ENCODE measurements at regions of chr12 and their contacts with region 1.

Region 1: DNA sequence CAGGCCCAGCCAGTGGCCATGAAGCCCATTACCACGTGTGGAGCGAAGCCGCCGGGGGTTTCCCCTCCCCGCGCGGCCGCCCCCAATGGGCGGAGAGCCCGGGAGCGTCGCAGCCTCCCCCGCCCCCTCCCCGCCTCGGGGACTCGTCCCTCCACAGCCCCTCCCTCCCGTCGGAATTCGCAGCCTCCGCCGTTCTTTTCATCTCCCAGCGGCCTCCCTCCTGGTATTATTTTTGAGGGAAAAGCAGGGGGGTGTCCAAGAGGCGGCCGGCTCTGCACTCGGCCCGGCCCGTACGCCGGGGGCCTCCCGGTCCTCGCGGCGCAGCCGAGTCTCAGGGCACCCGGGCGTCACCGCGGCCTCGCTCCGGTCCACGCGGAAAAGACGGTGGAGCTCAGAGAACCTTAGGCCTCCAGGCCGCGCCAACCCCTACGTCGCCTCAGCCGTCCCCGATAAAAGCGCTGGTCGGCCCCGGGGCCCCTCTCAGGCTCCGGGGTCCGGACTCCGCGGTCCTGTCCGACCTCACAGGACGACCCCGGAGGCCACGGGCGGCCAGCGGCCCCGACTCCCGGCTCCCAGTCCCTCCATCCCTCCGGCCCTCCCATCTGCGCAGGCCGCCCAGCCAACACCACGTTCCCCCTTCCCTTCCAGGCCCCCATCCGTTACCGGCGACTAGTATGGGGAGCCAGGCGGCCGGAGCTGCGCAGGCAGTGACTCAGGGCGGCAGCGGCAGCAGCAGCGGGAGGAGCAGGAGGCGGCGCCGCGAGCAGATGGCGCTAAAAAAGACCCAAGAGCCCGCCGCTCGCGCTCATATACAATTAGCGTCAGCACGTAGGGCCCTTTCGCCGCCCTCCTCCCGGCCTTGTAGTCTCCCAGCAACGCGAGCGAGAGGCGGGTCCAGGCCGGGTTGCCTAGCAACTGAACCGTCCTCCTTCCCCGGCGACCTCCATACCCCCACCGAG is at the start of gene NAP1L1:
- DNase-seq: peak; percentile 98
- ATAC-seq: peak; percentile 86
- H3K4me3 Mint-ChIP-seq: peak within 1 kb of the TSS; percentile 79
- H3K27ac Mint-ChIP-seq: peak within 1 kb of the TSS; percentile 98
- H3K4me1 Mint-ChIP-seq: peaks cover 44% of the 10 kb centered on the region
- H3K27me3 Mint-ChIP-seq: no peaks in the 10 kb centered on the region
- total RNA-seq, gene NAP1L1: 959 to 1,004 TPM

Region 2: GRCh38 chr12:75334384-75335030 is 749.7 kb before region 1 on chr12 and contains the start of gene GLIPR1L1:
- CTCF ChIA-PET with region 1: no interaction called
- POLR2A ChIA-PET with region 1: no interaction called
- intact Hi-C with region 1: loop called in 1 of 2 experiments (anchors 2 kb)
- DNase-seq: peak; percentile 91
- ATAC-seq: peak; percentile 82
- H3K4me3 Mint-ChIP-seq: peak within 1 kb of the TSS; percentile 61
- H3K27ac Mint-ChIP-seq: no peak within 1 kb of the TSS
- H3K4me1 Mint-ChIP-seq: peaks cover 25% of the 10 kb centered on the region
- H3K27me3 Mint-ChIP-seq: peaks cover 21% of the 10 kb centered on the region
- total RNA-seq, gene GLIPR1L1: not detected

Region 3: GRCh38 chr12:75511116-75512048 is 572.8 kb before region 1 on chr12 and contains the start of gene KRR1:
- CTCF ChIA-PET with region 1: no interaction called
- POLR2A ChIA-PET with region 1: no interaction called
- intact Hi-C with region 1: loop called (anchors 1 kb)
- DNase-seq: peak; percentile 94
- ATAC-seq: peak; percentile 96
- H3K4me3 Mint-ChIP-seq: peak within 1 kb of the TSS; percentile 100
- H3K27ac Mint-ChIP-seq: peak within 1 kb of the TSS; percentile 99
- H3K4me1 Mint-ChIP-seq: peaks cover 33% of the 10 kb centered on the region
- H3K27me3 Mint-ChIP-seq: no peaks in the 10 kb centered on the region
- total RNA-seq, gene KRR1: 122 to 147 TPM

Region 4: GRCh38 chr12:76064904-76065303 is 19.3 kb before region 1 on chr12:
- CTCF ChIA-PET with region 1: interaction called, 23 read pairs
- POLR2A ChIA-PET with region 1: interaction called, 4 read pairs
- intact Hi-C with region 1: no loop called
- DNase-seq: no peak
- ATAC-seq: no peak
- H3K4me3 Mint-ChIP-seq: no peak overlapping the region
- H3K27ac Mint-ChIP-seq: peak overlapping the region; percentile 38
- H3K4me1 Mint-ChIP-seq: peaks cover 42% of the 10 kb centered on the region
- H3K27me3 Mint-ChIP-seq: no peaks in the 10 kb centered on the region

Region 5: GRCh38 chr12:76277480-76277879 is 193.3 kb after region 1 on chr12:
- CTCF ChIA-PET with region 1: no interaction called
- POLR2A ChIA-PET with region 1: no interaction called
- intact Hi-C with region 1: loop called (anchors 2 kb)
- DNase-seq: no peak
- ATAC-seq: no peak
- H3K4me3 Mint-ChIP-seq: no peak overlapping the region
- H3K27ac Mint-ChIP-seq: no peak overlapping the region
- H3K4me1 Mint-ChIP-seq: peaks cover 14% of the 10 kb centered on the region
- H3K27me3 Mint-ChIP-seq: peaks cover 33% of the 10 kb centered on the region

Region 6: DNA sequence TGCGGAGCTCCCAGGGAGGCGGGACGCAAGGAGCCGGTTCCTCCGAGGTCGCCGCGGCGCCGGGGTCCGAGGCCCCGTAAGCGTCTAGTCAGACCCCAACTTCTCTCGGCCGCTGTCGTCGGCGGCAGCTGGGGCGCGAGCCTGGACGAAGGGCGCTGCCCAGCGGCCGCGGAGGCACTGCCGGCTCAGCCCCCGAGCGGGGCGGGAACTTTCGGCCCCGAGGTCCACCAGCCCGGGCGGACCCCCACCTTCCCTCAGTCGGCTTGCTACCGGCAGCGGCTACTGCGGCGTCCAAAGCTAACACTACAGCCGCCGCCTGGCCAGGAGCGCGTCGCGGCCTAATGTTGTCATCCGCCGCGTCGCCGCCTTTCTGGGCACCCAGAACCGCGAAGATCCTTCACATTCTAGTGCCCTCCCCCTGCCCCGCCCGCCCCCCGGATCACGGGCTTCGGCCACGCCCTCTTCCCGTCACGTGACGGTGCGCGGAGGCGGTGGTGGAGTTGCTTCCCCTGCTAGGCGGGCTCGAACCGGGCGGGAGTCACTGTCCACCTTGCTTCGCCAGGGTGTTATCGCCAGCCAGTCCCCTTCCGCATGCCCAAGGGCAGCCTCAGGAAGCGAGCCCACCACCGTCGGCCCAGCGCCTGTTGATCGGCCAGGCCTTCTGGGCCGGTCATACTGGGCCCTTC is 475.4 kb after region 1 on chr12 and contains the start of gene OSBPL8:
- CTCF ChIA-PET with region 1: no interaction called
- POLR2A ChIA-PET with region 1: interaction called, 3 read pairs
- intact Hi-C with region 1: loop called (anchors 1 to 2 kb)
- DNase-seq: peak; percentile 98
- ATAC-seq: peak; percentile 70
- H3K4me3 Mint-ChIP-seq: peak within 1 kb of the TSS; percentile 86
- H3K27ac Mint-ChIP-seq: peak within 1 kb of the TSS; percentile 98
- H3K4me1 Mint-ChIP-seq: peaks cover 24% of the 10 kb centered on the region
- H3K27me3 Mint-ChIP-seq: no peaks in the 10 kb centered on the region
- total RNA-seq, gene OSBPL8: 70.2 to 78.5 TPM

Measured in activated CD4-positive, alpha-beta T cell treated with anti-CD3 and anti-CD28 coated beads for 36 hours (primary cell).